ENCODE measurements at regions of chr4 and their contacts with region 1.

Region 1: GRCh38 chr4:73683033-73683432 is 57.3 kb upstream of the CXCL8 start:
- DNase-seq: no peak
- H3K4me3 Mint-ChIP-seq: no peak overlapping the region
- H3K27ac Mint-ChIP-seq: peak overlapping the region; percentile 97
- H3K4me1 Mint-ChIP-seq: peaks cover 44% of the 10 kb centered on the region
- H3K27me3 Mint-ChIP-seq: no peaks in the 10 kb centered on the region
- CTCF ChIP-seq: no peak

Region 2: DNA sequence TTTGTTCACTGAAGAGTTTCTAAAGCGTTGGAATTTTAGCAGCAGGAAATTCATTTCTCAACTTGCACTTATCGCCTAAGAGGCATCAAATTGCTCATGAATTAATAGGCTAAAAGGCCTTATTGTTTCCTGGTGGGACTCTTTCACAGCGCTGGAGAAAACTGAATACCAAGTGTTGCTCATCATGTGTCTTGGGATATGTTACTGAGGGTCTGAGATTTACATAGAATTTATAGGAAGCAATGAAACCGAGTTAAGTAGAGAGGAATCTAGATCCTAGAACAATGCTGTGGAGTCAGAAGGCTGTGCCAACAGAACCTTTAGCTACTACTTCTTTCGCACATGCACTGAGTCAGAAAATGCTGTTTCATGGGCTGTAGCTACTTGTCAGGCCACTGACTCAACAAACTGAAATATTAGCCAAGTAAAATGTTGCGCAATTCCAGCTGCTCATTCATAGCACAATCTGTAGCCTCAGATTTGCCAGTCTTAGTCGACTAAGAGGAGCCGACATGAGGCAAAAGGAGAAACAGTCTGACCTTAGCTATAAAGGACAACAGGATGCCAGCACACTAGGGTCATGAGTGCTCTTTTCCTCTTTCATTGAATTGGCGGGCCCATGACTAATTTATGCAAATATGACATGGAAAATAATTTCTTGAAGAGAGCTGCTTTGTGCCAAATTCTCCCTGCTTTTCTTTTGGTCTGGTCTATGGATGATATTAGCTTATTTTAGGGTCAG is 21.5 kb after region 1 on chr4:
- CTCF ChIA-PET with region 1: interaction called, 13 read pairs
- intact Hi-C with region 1: loop called (anchors 2 kb)
- DNase-seq: peak; percentile 66
- H3K4me3 Mint-ChIP-seq: no peak overlapping the region
- H3K27ac Mint-ChIP-seq: peak overlapping the region; percentile 95
- H3K4me1 Mint-ChIP-seq: peaks cover 67% of the 10 kb centered on the region
- H3K27me3 Mint-ChIP-seq: no peaks in the 10 kb centered on the region
- CTCF ChIP-seq: no peak

Region 3: GRCh38 chr4:73816814-73817213 is 133.8 kb after region 1 on chr4:
- CTCF ChIA-PET with region 1: no interaction called
- intact Hi-C with region 1: no loop called
- DNase-seq: peak; percentile 49
- H3K4me3 Mint-ChIP-seq: peak overlapping the region; percentile 5
- H3K27ac Mint-ChIP-seq: peak overlapping the region; percentile 95
- H3K4me1 Mint-ChIP-seq: peaks cover 57% of the 10 kb centered on the region
- H3K27me3 Mint-ChIP-seq: no peaks in the 10 kb centered on the region
- CTCF ChIP-seq: no peak

Region 4: DNA sequence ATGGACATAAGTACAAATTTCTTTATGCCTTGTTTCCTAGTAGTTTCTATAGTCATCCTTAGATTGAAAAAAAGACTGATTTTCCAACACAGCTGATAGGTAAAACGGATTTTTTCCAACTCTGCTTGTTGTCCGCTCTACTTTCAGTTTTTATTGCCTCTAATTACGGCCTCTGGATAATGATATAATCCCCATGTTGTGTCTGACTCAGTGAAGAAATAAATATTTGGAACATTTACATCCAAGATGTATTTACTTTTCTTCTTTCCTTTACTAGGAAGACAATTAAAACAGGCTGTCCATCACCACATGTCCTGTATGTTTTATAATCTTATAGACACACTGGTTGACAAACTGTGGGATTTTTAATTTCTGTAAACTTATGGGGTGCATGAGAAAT is 362.2 kb after region 1 on chr4:
- CTCF ChIA-PET with region 1: no interaction called
- intact Hi-C with region 1: no loop called
- DNase-seq: no peak
- H3K4me3 Mint-ChIP-seq: peak overlapping the region; percentile 17
- H3K27ac Mint-ChIP-seq: peak overlapping the region; percentile 52
- H3K4me1 Mint-ChIP-seq: peaks cover 35% of the 10 kb centered on the region
- H3K27me3 Mint-ChIP-seq: no peaks in the 10 kb centered on the region
- CTCF ChIP-seq: no peak

Measured in Calu3 (cell line).